Activated naive CD4-positive, alpha-beta T cell treated with anti-CD3 and anti-CD28 coated beads for 36 hours (primary cell): ENCODE measurements at regions of chr1 and their contacts with region 1.

Region 1: DNA sequence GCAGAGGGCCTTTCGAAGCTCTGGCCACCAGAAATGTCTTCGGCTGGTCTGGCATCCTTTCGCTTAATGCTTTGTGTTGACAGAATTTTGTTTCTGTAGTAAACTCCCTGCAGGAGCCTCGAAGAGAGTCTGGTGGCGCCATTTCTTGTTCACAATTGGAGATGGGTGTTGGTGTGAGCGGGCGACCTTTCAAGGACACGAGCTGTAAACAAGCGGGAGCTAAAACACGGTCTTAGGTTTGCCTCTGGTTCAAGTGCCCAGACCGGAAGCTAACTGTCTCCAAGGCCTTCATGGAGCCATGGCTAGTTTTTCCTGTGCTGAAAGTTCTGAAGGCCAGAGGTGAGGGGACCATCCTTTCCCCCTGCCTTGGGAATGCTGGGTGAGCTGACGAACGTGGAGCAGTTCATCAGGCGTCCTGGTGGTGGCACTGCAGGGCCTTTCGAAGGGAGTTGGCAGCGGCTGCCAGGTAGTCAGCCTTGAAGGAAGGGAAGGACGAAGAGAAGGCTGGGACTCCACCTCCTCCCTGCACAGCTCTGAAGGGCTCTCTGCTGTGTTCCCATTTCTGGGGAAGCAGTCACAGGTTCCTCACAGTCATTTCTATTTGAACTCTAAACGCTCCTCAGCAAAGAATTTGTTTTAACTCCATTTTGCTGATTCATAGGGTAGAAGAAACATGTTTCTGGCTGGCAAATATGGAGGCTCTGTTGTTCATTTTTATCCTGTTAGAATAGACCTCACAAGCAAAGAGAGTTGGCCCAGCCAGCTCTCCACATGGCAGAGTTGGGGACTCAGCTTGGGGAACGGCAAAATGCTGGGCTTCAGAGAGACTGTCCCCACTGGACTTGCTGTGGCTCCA is 35.2 kb downstream of the URB2 start:
- DNase-seq: peak; percentile 90
- H3K4me3 Mint-ChIP-seq: no peak overlapping the region
- H3K27ac Mint-ChIP-seq: no peak overlapping the region
- H3K4me1 Mint-ChIP-seq: peaks cover 12% of the 10 kb centered on the region
- H3K27me3 Mint-ChIP-seq: no peaks in the 10 kb centered on the region

Region 2: GRCh38 chr1:229694053-229694693 is 32.9 kb after region 1 on chr1:
- CTCF ChIA-PET with region 1: no interaction called
- intact Hi-C with region 1: loop called (anchors 1 kb)
- DNase-seq: no peak
- H3K4me3 Mint-ChIP-seq: no peak overlapping the region
- H3K27ac Mint-ChIP-seq: no peak overlapping the region
- H3K4me1 Mint-ChIP-seq: peaks cover 12% of the 10 kb centered on the region
- H3K27me3 Mint-ChIP-seq: peaks cover 9% of the 10 kb centered on the region

Region 3: DNA sequence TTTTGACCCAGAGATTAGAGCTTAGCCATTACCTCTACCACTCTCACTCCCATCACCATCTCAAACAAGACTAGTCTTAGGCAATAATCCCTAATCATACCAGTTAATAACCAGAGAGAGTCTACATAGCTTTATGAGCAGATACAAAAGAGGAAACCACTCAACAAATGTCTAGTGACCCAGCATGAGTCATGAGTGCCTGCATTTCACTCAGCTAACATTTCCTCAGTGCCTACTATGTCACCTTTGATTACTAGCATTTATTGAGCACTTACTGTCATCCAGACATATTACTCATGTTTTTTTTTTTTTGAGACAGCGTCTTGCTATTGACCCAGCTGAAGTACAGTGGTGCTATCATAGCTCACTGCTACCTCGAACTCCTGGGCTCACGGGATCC is 369.9 kb after region 1 on chr1:
- CTCF ChIA-PET with region 1: no interaction called
- intact Hi-C with region 1: loop called (anchors 2 kb)
- DNase-seq: peak; percentile 48
- H3K4me3 Mint-ChIP-seq: no peak overlapping the region
- H3K27ac Mint-ChIP-seq: peak overlapping the region; percentile 85
- H3K4me1 Mint-ChIP-seq: peaks cover 29% of the 10 kb centered on the region
- H3K27me3 Mint-ChIP-seq: no peaks in the 10 kb centered on the region

Region 4: DNA sequence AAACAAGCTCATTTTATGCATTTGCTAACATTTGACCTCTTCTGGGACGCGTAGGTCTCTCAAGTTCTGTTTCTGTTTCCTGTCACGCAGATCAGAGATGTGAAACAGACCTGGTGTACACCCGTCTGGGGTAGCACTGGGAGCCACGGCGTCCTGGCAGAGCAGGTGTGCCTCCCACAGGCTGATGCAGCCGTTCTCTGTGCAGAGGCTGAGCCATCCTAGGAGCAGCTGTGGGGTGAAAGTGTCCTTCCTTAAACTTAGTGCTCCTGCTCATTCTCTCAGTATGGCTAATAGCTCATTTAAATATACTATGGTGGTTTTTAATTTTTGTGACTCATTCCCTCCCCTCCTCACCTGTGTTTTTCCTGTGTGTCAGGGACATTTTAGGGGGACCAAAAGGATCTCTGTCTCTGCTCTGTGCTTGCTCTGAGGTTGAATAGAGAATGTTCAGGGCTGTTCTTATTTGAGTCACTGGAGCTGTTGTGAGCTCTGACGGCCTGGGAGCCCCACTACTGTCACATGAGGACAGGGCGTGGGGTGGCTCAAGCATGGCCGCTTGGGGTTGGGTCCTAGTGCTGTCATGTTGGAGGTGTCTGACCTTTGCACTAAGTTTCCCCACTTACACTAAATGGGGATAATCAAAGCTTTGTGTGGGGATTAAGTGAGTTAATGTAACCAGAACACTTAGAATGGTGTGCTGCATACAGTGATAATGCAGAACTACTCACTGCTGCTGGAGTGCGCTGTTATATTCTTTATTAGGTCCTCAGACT is 448.8 kb after region 1 on chr1:
- CTCF ChIA-PET with region 1: no interaction called
- intact Hi-C with region 1: loop called (anchors 1 kb)
- DNase-seq: peak; percentile 95
- H3K4me3 Mint-ChIP-seq: peak overlapping the region; percentile 27
- H3K27ac Mint-ChIP-seq: peak overlapping the region; percentile 95
- H3K4me1 Mint-ChIP-seq: peaks cover 90% of the 10 kb centered on the region
- H3K27me3 Mint-ChIP-seq: no peaks in the 10 kb centered on the region

Region 5: GRCh38 chr1:230167419-230167852 is 506.2 kb after region 1 on chr1:
- CTCF ChIA-PET with region 1: interaction called, 7 read pairs
- intact Hi-C with region 1: loop called (anchors 1 kb)
- DNase-seq: peak; percentile 58
- H3K4me3 Mint-ChIP-seq: no peak overlapping the region
- H3K27ac Mint-ChIP-seq: peak overlapping the region; percentile 50
- H3K4me1 Mint-ChIP-seq: peaks cover 55% of the 10 kb centered on the region
- H3K27me3 Mint-ChIP-seq: no peaks in the 10 kb centered on the region

Region 6: DNA sequence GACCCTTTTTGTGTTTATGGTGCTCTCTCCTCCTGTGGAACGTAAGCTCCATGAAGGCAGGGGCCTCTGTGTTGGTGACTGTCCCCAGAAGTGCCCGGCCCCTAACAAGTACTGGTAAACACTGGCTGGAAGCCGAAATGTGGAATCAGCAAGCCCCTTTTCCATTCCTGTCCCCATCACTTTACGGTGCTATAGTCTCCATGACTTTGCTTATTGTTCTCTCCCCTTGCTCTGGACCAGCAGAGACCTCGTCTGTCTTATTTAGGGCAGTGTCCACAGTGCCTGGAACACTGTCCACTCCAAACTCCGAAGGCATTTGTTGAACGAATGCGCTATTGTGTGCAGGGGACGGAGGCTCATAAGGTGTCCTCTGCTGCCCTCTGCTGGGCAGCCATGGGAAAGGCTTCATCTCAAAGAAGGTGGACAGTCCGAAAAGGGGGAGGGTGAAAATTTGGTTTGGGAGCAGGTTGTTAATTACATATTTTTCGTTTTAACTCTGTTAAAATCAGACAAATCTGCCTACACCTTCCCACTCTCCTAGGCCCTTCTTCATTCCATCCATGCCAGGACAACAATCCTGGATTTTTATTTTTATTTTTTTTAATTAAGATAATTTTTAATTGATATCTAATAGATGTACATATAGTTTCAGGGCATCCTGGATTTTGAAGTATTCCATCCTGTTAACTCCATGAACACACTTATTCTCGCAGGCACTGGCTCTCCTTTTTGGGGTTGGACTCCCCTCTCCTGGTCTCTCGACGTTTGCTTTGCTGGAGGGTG is 649.3 kb after region 1 on chr1:
- CTCF ChIA-PET with region 1: interaction called, 13 read pairs
- intact Hi-C with region 1: loop called (anchors 1 kb)
- DNase-seq: peak; percentile 75
- H3K4me3 Mint-ChIP-seq: no peak overlapping the region
- H3K27ac Mint-ChIP-seq: no peak overlapping the region
- H3K4me1 Mint-ChIP-seq: peaks cover 10% of the 10 kb centered on the region
- H3K27me3 Mint-ChIP-seq: peaks cover 4% of the 10 kb centered on the region